ENCODE measurements at regions of chr6 and their contacts with region 1.

Region 1: DNA sequence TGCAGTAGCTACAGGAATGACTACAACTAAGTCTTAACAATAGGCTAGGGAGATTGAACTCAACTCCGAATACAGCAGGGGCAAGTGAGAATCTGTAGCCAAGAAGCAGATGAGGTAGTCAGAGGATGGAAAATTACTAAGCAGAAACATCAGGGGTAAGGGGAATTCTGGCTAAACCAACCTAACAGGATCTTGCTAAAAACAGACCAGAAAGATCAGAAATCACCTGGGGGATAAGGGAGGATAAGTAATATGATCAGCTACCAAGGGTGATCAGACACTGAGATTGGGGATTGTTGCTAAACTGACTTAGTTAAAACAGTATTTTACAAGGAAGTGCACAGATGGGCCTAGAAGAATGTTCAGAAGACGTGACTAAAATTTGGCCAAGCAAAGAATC is 217.5 kb downstream of the TENT5A start:
- DNase-seq: no peak
- H3K4me3 ChIP-seq: no peak overlapping the region
- H3K27ac ChIP-seq: no peak overlapping the region
- H3K4me1 ChIP-seq: no peaks in the 10 kb centered on the region
- H3K27me3 ChIP-seq: no peaks in the 10 kb centered on the region
- CTCF ChIP-seq: no peak
- POLR2A ChIP-seq: no peak

Region 2: GRCh38 chr6:81075974-81076373 is 459.0 kb before region 1 on chr6:
- intact Hi-C with region 1: no loop called
- DNase-seq: no peak
- H3K4me3 ChIP-seq: no peak overlapping the region
- H3K27ac ChIP-seq: no peak overlapping the region
- H3K4me1 ChIP-seq: no peaks in the 10 kb centered on the region
- H3K27me3 ChIP-seq: no peaks in the 10 kb centered on the region
- CTCF ChIP-seq: no peak
- POLR2A ChIP-seq: no peak

Region 3: DNA sequence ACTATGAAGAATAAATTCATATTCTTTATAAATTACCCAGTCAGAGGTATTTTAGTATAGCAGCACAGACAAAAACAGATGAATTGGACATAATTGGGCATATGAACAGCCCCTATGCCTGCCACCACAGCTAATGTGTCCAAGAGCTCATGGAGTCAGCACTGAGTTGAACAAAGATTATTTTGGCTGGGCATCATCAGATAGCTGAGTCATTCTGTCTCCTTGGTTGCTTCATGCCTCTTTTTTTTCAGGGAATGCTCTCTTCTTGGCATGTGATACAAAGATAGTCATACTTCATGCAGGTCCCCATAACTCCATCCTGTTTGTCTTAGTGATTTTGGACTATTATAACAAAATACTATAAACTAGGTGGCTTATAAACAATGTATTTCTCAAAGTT is 58.1 kb before region 1 on chr6:
- intact Hi-C with region 1: no loop called
- DNase-seq: no peak
- H3K4me3 ChIP-seq: no peak overlapping the region
- H3K27ac ChIP-seq: no peak overlapping the region
- H3K4me1 ChIP-seq: no peaks in the 10 kb centered on the region
- H3K27me3 ChIP-seq: no peaks in the 10 kb centered on the region
- CTCF ChIP-seq: no peak
- POLR2A ChIP-seq: no peak

Region 4: DNA sequence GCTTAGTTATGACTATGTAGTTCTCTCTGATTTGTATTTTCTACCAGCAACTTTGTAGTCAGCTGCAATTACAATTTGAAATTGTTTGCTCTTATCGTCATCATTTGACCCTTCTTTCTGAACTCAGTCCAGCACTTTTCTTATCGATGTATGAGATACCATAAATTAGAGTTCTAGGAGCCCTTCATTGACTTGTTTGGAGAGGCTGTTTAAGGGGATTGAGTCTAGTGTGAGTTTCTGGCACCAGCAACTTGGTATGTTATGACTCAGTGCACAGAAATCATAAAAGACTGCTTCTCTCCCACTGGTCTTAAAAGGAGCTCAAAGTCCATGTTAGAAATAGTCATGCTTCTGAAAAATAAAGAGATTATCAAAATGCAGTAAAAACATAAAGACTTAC is 27.2 kb after region 1 on chr6:
- intact Hi-C with region 1: loop called (anchors 1 kb)
- DNase-seq: no peak
- H3K4me3 ChIP-seq: no peak overlapping the region
- H3K27ac ChIP-seq: no peak overlapping the region
- H3K4me1 ChIP-seq: no peaks in the 10 kb centered on the region
- H3K27me3 ChIP-seq: no peaks in the 10 kb centered on the region
- CTCF ChIP-seq: no peak
- POLR2A ChIP-seq: no peak

Region 5: GRCh38 chr6:81683928-81684327 is 148.9 kb after region 1 on chr6:
- intact Hi-C with region 1: no loop called
- DNase-seq: no peak
- H3K4me3 ChIP-seq: no peak overlapping the region
- H3K27ac ChIP-seq: no peak overlapping the region
- H3K4me1 ChIP-seq: no peaks in the 10 kb centered on the region
- H3K27me3 ChIP-seq: no peaks in the 10 kb centered on the region
- CTCF ChIP-seq: no peak
- POLR2A ChIP-seq: no peak